ENCODE measurements at regions of chr4 and their contacts with region 1.

Region 1: GRCh38 chr4:151276787-151277562 is at the start of gene PRSS48:
- DNase-seq: no peak
- H3K4me3 ChIP-seq: no peak within 1 kb of the TSS
- CTCF ChIP-seq: peak; percentile 87

Region 2: GRCh38 chr4:151266497-151266896 is 10.5 kb before region 1 on chr4:
- CTCF ChIA-PET with region 1: interaction called, 45 read pairs
- POLR2A ChIA-PET with region 1: interaction called, 3 read pairs
- DNase-seq: peak; percentile 10
- H3K4me3 ChIP-seq: no peak overlapping the region
- CTCF ChIP-seq: no peak

Region 3: DNA sequence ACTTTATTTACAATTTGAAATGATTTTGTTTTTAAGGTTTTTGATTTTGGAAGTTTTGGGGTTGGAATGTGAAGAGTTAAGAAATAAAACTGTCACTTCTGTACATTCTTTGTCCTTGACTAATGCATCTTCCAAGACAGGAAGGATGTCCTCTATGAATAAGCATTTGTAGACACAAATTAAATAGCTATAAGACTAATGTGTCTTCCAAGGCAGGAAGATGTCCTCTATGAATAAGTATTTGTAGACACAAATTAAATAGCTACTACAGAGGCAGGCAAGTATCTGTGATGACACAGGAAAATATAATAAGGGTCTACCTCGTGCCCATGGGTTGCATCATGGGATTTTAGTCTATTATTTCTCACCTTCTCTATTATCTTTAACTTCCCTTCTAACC is 14.5 kb after region 1 on chr4:
- CTCF ChIA-PET with region 1: interaction called, 20 read pairs
- POLR2A ChIA-PET with region 1: no interaction called
- DNase-seq: no peak
- H3K4me3 ChIP-seq: no peak overlapping the region
- CTCF ChIP-seq: no peak

Region 4: DNA sequence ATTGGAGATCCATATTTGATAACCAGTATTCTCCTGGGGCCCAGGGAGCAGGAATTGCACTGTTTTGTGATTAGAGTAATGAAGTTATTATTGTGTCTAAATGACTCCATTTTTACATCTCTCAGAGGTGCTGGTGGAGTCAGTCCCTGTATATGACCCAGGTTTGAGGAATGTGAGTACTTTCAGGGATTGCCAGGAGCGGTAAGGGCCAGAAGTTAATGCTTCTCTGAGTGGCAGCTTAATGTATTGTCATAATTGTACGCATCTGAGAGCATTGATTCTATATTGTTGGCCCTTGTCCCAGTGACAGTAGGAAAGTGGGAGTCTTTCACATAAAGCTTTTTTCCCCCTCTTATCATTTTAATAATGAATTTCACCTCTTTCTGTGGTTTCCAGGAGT is 337.6 kb after region 1 on chr4:
- CTCF ChIA-PET with region 1: interaction called, 11 read pairs
- POLR2A ChIA-PET with region 1: no interaction called
- DNase-seq: no peak
- H3K4me3 ChIP-seq: no peak overlapping the region
- CTCF ChIP-seq: no peak